AG04450 (cell line): ENCODE measurements at regions of chr17 and their contacts with region 1.

Region 1: DNA sequence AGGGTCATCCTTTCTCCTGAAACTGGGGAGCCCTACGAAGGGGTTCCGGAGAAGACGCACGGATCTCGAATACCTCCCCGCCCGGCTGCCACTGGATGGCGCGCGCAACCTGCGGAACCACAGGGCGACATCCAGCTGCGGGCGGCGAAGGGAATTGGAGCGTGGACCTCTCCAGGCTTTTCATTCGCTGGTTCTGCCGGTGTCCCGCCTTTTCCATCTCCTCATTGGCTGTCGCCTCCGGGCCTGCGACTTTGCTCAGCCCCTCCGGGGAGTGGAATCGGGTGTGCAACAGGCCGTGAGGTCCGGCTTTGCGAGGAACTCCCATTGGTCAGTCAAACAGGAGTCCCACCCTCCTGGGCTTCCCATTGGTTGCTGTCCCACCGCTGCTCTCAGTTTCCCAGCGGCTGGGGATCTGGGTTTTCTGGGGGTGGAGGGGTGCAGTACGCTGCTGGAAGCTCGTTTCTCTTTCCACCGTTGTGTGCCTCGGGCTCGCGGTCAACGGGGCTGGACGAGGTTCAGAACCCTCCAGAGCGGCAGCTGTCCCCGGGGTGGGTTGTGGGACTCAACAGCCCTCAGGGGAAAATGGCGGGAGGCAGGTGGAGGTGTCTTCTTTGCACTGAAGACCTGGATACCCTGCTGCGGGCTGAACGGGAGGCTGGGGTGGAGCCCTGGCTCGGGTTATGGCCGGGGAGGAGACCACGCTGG is 14.5 kb downstream of the OR1D5 start:
- DNase-seq: peak; percentile 94
- H3K4me3 ChIP-seq: peak overlapping the region; percentile 76
- H3K27ac ChIP-seq: peak overlapping the region; percentile 65
- H3K27me3 ChIP-seq: no peaks in the 10 kb centered on the region
- CTCF ChIP-seq: peak; percentile 60

Region 2: DNA sequence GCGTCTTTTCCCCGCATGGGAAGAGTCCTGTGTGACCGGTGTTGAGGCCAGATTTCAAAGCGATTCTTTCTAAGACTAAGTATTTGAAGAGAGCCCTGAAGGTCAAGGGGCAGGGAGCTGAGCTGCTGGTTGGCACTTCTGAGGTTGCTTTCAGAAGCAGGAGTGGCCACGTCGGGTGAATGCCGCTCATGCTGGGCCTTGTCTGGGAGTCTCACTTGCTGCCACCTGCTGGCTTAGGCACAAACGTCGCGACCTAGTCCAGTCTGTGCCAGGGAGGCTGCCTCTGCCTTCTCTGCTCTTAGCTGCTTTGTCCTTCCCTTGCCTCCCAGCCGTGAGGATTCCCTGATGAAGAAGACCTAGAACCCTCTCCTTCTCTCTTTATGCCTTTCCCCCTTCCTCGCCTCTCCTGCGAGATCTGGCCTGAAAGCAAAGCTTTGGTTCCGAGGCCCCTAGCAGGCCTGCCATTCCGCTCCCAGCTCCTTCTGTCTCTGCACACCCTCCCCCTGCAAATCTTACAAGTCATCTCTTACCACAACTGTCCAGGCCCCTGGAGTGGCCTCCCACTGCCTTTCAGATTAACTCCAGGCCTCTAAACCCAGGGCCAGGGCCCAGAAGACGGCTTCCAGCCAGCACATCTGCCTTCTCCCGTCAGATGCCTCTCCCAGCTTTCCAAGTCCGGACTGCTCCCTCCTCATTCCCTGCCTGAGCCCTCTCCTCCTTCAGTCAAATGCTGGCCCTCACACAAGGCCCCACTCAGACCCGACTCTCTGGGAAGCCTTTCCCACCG is 599.0 kb after region 1 on chr17:
- CTCF ChIA-PET with region 1: interaction called, 28 read pairs
- POLR2A ChIA-PET with region 1: interaction called, 3 read pairs
- DNase-seq: no peak
- H3K4me3 ChIP-seq: no peak overlapping the region
- H3K27ac ChIP-seq: no peak overlapping the region
- H3K27me3 ChIP-seq: no peaks in the 10 kb centered on the region
- CTCF ChIP-seq: peak; percentile 61